ENCODE measurements at regions of chr9 and their contacts with region 1.

Region 1: DNA sequence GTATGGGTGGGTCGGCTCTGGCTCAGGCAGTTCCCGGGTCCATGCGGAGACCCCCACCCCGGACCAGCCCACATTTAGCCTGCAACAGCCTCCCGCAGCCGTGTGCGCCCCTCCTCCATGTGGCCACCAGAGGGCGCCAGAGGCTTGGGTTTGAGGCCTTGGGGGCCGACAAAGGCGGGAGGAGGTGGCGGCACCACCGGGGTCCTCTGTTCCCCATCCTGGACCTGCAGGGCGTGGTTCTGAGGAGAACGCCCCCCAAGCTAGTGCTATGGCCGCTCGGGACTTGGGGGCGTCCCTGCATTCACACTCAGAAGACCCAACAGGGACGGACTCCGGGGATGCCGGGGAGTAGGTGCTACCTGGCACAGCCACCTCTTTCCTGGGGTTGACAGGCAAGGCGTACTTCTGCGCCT is 16.5 kb downstream of the ASS1 start:
- DNase-seq: peak; percentile 42 to 81 (median 48)
- ATAC-seq: peak; percentile 44 to 57 (median 50)
- H3K4me3 ChIP-seq: no peak overlapping the region
- H3K27ac ChIP-seq: no peak overlapping the region
- H3K4me1 ChIP-seq: peaks cover 0 to 28% (median 0%) of the 10 kb centered on the region in 12 donors
- H3K27me3 ChIP-seq: no peaks in the 10 kb centered on the region
- CTCF ChIP-seq: peak; percentile 86 to 99 (median 94)
- POLR2A ChIP-seq: no peak

Region 2: DNA sequence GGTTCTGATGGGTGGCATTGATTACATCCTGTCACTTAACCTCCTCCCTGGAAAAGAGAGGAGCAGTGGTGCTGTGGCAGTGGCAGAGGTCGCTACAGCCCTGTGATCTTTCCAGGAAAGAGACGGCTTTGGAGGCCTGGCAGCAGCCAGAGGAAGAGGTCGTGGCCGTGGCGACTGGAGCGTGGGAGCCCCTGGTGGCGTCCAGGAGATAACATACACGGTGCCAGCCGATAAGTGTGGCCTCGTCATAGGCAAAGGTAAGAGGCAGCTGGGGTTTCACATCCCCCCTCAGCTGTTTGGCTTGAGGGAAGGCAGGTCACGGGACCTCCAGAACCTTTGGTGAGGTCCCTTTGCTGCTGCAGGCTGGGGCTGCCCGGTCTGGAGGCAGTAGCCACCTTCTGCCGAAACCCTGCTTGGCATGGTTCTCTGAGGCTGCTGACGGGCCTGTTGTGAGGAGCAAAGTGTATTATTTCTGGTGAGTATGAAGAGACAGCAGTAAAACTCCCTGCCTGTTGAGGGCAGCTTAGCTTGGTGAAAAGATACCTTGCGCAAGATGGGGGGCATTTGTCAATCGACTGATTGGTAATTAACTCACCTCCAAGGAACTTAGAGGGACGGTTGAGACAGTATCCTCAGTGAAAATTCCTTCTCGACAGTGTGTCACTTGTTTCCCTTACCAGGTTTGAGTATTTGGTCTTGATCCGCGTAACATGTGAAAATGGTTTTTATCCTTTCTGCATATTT is 165.2 kb after region 1 on chr9:
- intact Hi-C with region 1: loop called in 1 of 10 experiments (anchors 10 kb)
- DNase-seq: peak in 3 of 5 donors; percentile 35 to 61 (median 59)
- ATAC-seq: peak in 3 of 4 donors; percentile 37 to 44 (median 41)
- H3K4me3 ChIP-seq: no peak overlapping the region
- H3K27ac ChIP-seq: peak overlapping the region in 4 of 12 donors; percentile 3 to 42 (median 22)
- H3K4me1 ChIP-seq: peaks cover 0 to 51% (median 16%) of the 10 kb centered on the region in 12 donors
- H3K27me3 ChIP-seq: no peaks in the 10 kb centered on the region
- CTCF ChIP-seq: peak in 7 of 12 donors; percentile 7 to 38 (median 18)
- POLR2A ChIP-seq: no peak

Region 3: GRCh38 chr9:130701056-130702022 is 240.1 kb after region 1 on chr9:
- intact Hi-C with region 1: no loop called
- DNase-seq: peak; percentile 80 to 89 (median 82)
- ATAC-seq: peak; percentile 90 to 96 (median 92)
- H3K4me3 ChIP-seq: no peak overlapping the region
- H3K27ac ChIP-seq: peak overlapping the region in 4 of 12 donors; percentile 3 to 50 (median 15)
- H3K4me1 ChIP-seq: peaks cover 0 to 17% (median 8%) of the 10 kb centered on the region in 12 donors
- H3K27me3 ChIP-seq: no peaks in the 10 kb centered on the region
- CTCF ChIP-seq: peak; percentile 90 to 97 (median 93)
- POLR2A ChIP-seq: no peak

Region 4: DNA sequence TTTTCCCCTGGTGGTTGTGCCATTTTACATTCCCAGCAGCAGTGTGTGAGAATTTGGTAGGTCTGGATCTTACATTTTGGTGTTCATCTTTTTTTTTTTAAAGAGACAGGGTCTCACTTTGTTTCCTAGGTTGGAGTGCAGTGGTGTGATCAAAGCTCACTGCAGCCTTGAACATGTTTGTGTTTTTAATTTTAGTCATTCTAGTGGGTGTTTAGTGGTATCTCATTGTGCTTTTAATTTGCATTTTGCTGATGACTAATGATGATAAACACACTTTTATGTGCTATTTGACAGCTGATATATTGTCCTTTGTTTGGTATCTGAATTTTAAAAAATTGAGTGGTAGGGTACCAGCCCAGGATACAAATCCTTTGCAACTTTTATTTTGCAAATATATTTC is 988.1 kb after region 1 on chr9:
- intact Hi-C with region 1: no loop called
- DNase-seq: no peak
- ATAC-seq: no peak
- H3K4me3 ChIP-seq: no peak overlapping the region
- H3K27ac ChIP-seq: no peak overlapping the region
- H3K4me1 ChIP-seq: peaks cover 0 to 6% (median 0%) of the 10 kb centered on the region in 12 donors
- H3K27me3 ChIP-seq: no peaks in the 10 kb centered on the region
- CTCF ChIP-seq: no peak
- POLR2A ChIP-seq: no peak

Measured in heart left ventricle (tissue), 16 donors.